Left ventricle myocardium superior (tissue), 1 donor: ENCODE measurements at regions of chr11 and their contacts with region 1.

Region 1: DNA sequence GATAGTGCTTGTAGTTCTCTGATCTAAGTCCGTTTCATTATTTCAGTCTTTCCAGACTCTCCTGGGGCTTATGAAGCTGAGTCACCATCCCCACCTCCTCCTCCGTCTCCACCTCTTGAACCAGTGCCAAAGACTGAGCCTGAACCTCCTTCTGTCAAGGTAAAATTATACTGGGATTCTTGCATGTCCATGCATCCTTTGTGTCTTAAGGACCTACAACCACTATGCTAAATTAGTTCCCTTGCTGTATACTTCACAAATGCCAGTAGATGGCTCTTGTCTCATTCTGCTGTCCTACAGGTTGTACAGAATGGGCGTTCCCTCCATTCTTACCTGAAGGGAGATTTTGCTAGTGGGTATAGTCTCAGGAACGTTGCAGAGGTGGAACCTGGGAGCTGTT is 42.2 kb downstream of the POLD3 start:
- DNase-seq: no peak
- ATAC-seq: peak; percentile 83

Region 2: GRCh38 chr11:74726547-74727182 is 92.1 kb after region 1 on chr11:
- intact Hi-C with region 1: loop called (anchors 10 kb)
- DNase-seq: peak; percentile 82
- ATAC-seq: peak; percentile 91